ENCODE measurements at regions of chr12 and their contacts with region 1.

Region 1: GRCh38 chr12:49673446-49674317 is 33.5 kb downstream of the FMNL3 start:
- DNase-seq: peak; percentile 62
- H3K4me3 Mint-ChIP-seq: peak overlapping the region; percentile 27
- H3K27ac Mint-ChIP-seq: peak overlapping the region; percentile 91
- H3K4me1 Mint-ChIP-seq: peaks cover 69% of the 10 kb centered on the region
- H3K27me3 Mint-ChIP-seq: no peaks in the 10 kb centered on the region

Region 2: DNA sequence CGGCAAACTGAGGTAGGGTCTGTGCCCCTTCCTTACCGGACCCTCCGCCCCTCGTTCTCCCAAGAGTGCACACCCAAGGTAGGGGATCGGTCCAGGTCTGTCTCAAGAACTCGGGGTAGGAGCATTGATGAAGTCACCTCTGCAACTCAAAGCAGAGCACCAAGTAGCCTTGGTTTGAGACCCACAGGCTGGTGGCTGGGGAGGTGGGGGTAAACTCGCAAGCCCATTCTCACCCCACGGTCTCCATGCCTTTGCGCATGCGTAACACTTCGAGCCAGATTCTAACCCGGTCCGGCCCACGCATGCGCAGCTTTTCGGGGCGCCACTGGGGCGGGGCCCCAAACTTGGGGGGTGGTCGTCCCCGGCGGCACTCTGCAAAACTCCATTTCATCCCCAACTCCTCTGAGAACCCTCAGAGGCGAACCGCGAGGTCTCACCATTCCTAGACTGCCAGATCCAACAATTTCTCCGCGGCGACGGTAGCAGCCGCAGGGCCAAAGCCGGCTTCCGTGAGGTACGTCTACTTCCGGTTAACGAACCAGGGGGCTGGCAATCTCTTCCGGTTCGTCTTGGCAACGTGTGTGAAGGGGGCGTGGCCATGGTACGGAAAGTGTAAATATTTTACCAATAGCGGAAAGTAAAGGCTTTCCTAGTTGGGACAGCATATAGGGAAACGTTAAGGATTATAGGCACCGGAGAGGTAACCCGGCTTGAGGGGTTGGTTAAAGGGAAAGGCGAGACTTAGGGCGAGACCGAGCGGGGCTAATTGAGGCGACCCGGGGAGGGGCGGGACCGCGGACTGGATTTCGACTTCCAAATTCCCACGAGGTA is 105.9 kb before region 1 on chr12 and contains the start of gene MCRS1:
- intact Hi-C with region 1: no loop called
- DNase-seq: peak; percentile 97
- H3K4me3 Mint-ChIP-seq: peak within 1 kb of the TSS; percentile 93
- H3K27ac Mint-ChIP-seq: peak within 1 kb of the TSS; percentile 99
- H3K4me1 Mint-ChIP-seq: peaks cover 39% of the 10 kb centered on the region
- H3K27me3 Mint-ChIP-seq: no peaks in the 10 kb centered on the region
- total RNA-seq, gene MCRS1: 71.4 and 79.6 TPM in 2 replicates

Region 3: GRCh38 chr12:49687941-49688340 is 14.3 kb after region 1 on chr12:
- intact Hi-C with region 1: loop called (anchors 2 kb)
- DNase-seq: no peak
- H3K4me3 Mint-ChIP-seq: no peak overlapping the region
- H3K27ac Mint-ChIP-seq: no peak overlapping the region
- H3K4me1 Mint-ChIP-seq: peaks cover 38% of the 10 kb centered on the region
- H3K27me3 Mint-ChIP-seq: no peaks in the 10 kb centered on the region

Region 4: GRCh38 chr12:49698619-49699545 is 25.2 kb after region 1 on chr12:
- intact Hi-C with region 1: loop called (anchors 2 kb)
- DNase-seq: peak; percentile 77
- H3K4me3 Mint-ChIP-seq: peak overlapping the region; percentile 72
- H3K27ac Mint-ChIP-seq: peak overlapping the region; percentile 83
- H3K4me1 Mint-ChIP-seq: peaks cover 42% of the 10 kb centered on the region
- H3K27me3 Mint-ChIP-seq: no peaks in the 10 kb centered on the region

Measured in activated CD4-positive, alpha-beta T cell treated with anti-CD3 and anti-CD28 coated beads, Interleukin-2, amount 10 ng/mL, durations not matched to agents 24 days and 14 days (primary cell).